ENCODE measurements at regions of chr5 and their contacts with region 1.

Region 1: GRCh38 chr5:118775799-118776499 is 212.4 kb downstream of the DTWD2 start:
- DNase-seq: no peak
- H3K4me3 ChIP-seq: no peak overlapping the region
- H3K27ac ChIP-seq: no peak overlapping the region
- H3K4me1 ChIP-seq: no peaks in the 10 kb centered on the region
- H3K27me3 ChIP-seq: no peaks in the 10 kb centered on the region
- CTCF ChIP-seq: no peak
- EP300 ChIP-seq: no peak
- RAD21 ChIP-seq: no peak

Region 2: DNA sequence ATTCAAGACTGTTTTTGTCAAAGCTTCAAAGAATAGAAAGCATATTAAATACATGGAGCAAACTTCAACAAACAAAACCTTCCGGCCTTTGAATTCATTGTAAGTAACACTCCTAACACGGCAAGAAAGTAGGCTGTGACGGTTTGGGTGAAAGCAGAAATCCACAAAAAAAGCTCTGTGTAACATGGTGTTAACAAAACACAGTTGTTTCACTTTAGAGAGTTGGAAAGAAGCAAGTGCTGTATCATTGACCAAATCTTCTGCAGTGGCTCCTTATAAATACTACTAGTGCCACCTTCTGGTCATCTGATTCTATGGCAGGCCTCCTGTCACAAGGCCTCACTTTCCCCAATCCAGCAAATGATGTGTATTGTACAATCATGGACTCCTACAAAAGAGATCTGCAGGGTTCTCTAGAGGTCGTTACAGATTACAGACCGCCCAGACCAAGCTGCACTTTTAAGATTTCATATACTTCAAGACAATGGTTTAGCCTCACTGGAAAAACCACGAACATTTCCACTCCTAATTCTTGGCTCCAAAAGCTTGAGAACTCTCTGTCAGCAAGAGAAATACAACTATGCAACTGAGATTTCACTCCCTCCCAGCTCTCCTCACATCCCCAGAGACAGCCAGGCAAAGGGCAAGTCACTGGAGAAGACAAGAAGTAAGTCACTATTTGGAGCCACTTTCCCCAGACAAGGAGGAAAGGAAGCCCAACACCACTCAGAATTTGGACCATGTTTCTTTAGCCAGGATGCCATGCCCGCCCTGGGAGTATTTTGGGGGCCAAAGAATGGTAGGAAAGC is 16.2 kb after region 1 on chr5:
- CTCF ChIA-PET with region 1: interaction called, 14 read pairs
- POLR2A ChIA-PET with region 1: no interaction called
- DNase-seq: peak; percentile 46
- H3K4me3 ChIP-seq: peak overlapping the region in 1 of 2 experiments; percentile 47; a peak in 1 of 4 replicates
- H3K27ac ChIP-seq: no peak overlapping the region
- H3K4me1 ChIP-seq: peaks cover 4 to 5% of the 10 kb centered on the region in 2 experiments; a peak in 3 of 4 replicates
- H3K27me3 ChIP-seq: no peaks in the 10 kb centered on the region
- CTCF ChIP-seq: peak; percentile 83
- EP300 ChIP-seq: no peak
- RAD21 ChIP-seq: peak; percentile 87